Sigmoid colon (tissue), 7 donors: ENCODE measurements at regions of chr3 and their contacts with region 1.

Region 1: DNA sequence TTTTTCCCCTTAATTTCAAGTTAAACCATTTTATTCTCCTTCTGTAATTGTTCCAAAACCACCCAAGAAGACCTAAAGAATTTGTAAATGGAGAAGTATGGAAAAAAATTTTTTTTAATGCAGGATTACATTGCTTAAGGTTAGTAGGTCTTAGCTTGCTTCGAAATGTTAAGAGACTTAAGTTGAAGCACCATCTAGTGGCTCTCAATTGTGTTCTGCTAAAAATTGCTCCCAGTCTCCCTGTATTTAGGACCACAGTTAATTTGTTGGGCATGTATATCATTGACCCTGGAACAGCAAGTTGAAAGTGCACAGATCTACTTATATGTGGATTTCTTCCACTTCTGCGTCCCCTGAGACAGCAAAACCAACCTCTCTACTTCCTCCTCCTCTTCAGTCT is 32.4 kb downstream of the CD200R1L start:
- DNase-seq: no peak
- H3K4me3 ChIP-seq: no peak overlapping the region
- H3K27ac ChIP-seq: peak overlapping the region in 2 of 4 donors; percentile 82 to 83
- H3K4me1 ChIP-seq: peaks cover 0 to 42% (median 29%) of the 10 kb centered on the region in 4 donors
- H3K27me3 ChIP-seq: no peaks in the 10 kb centered on the region
- CTCF ChIP-seq: peak in 3 of 4 experiments; percentile 23 to 44 (median 31)
- EP300 ChIP-seq: no peak
- POLR2A ChIP-seq: no peak

Region 2: GRCh38 chr3:111967651-111968274 is 846.5 kb before region 1 on chr3:
- intact Hi-C with region 1: no loop called
- DNase-seq: peak; percentile 92
- H3K4me3 ChIP-seq: no peak overlapping the region
- H3K27ac ChIP-seq: peak overlapping the region; percentile 44 to 54 (median 51)
- H3K4me1 ChIP-seq: peaks cover 0 to 32% (median 19%) of the 10 kb centered on the region in 4 donors
- H3K27me3 ChIP-seq: no peaks in the 10 kb centered on the region
- CTCF ChIP-seq: peak; percentile 86 to 88 (median 86)
- EP300 ChIP-seq: no peak
- POLR2A ChIP-seq: no peak

Region 3: GRCh38 chr3:112561731-112562688 is 252.3 kb before region 1 on chr3 and contains the starts of genes ATG3 and SLC35A5:
- intact Hi-C with region 1: loop called (anchors 5 kb)
- DNase-seq: peak; percentile 99
- H3K4me3 ChIP-seq: peak within 1 kb of the TSS; percentile 68 to 98 (median 88)
- H3K27ac ChIP-seq: peak within 1 kb of the TSS; percentile 94 to 98 (median 97)
- H3K4me1 ChIP-seq: peaks cover 0 to 37% (median 27%) of the 10 kb centered on the region in 4 donors
- H3K27me3 ChIP-seq: no peaks in the 10 kb centered on the region
- CTCF ChIP-seq: no peak
- EP300 ChIP-seq: peak in 1 of 4 donors; percentile 70
- POLR2A ChIP-seq: peak; percentile 67 to 79
- total RNA-seq, gene ATG3: 28.0 to 49.5 (median 41.1) TPM
- total RNA-seq, gene SLC35A5: 16.1 to 32.1 (median 17.5) TPM

Region 4: DNA sequence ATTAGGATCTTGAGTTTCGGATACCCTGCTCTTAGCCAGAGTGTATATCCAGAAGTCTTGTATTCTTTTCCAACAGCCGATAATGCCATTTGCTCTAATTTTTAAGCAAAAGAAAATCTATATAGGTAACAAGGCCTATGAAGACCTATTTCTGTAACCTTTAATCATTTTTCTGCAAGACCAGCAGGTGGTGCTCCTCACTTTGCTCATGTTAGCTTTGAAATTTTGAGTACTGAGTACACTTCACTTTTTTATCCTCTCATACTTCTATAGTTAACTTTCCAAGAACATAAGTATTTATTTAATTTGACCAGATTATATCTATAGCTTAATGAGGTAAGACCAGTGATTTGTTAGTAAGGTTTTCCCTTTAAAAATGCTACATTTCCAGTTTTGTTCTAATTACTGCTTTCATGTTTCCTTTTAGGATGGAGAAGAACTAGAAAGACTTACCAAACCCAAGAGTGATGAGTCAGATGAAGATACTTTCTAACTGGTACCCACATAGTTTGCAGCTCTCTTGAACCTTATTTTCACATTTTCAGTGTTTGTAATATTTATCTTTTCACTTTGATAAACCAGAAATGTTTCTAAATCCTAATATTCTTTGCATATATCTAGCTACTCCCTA is 231.9 kb before region 1 on chr3:
- intact Hi-C with region 1: loop called (anchors 1 kb)
- DNase-seq: no peak
- H3K4me3 ChIP-seq: no peak overlapping the region
- H3K27ac ChIP-seq: no peak overlapping the region
- H3K4me1 ChIP-seq: peaks cover 0 to 9% (median 0%) of the 10 kb centered on the region in 4 donors
- H3K27me3 ChIP-seq: no peaks in the 10 kb centered on the region
- CTCF ChIP-seq: peak; percentile 48 to 65 (median 50)
- EP300 ChIP-seq: no peak
- POLR2A ChIP-seq: no peak

Region 5: GRCh38 chr3:112642912-112643506 is 171.3 kb before region 1 on chr3:
- intact Hi-C with region 1: loop called (anchors 2 kb)
- DNase-seq: peak; percentile 93
- H3K4me3 ChIP-seq: peak overlapping the region in 3 of 4 donors; percentile 11 to 15 (median 13)
- H3K27ac ChIP-seq: peak overlapping the region in 3 of 4 donors; percentile 11 to 86 (median 80)
- H3K4me1 ChIP-seq: peaks cover 0 to 65% (median 60%) of the 10 kb centered on the region in 4 donors
- H3K27me3 ChIP-seq: no peaks in the 10 kb centered on the region
- CTCF ChIP-seq: peak; percentile 77 to 81 (median 79)
- EP300 ChIP-seq: no peak
- POLR2A ChIP-seq: no peak

Region 6: DNA sequence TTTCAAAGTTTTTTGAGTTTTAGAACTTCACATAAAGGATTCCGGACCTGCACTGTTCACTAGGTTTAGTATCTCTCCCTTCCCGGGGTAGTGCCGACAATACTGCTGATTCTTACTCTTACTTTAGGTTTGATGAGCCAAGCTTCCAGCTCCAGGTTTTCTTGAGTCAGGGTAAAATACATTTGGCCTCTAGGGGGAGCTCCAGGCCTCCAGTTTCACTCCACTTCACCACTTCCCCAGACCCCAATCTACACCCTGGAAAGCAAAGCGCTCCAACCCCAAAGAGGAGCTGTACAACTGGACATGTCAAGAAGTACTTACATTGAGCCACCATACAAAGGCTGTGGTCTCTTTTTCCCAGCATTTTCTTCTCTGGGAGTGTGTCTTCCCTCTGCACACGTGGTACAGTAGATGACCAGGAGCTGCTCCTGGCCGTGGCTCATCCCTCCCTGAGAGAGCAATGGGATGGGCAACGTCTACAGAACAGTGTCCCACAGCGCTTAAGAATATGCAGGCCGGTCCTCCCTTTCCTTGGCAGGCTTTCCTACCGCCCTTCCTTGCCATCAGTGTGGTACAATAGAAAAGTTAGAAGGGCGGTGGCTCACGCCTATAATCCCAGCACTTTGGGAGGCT is 79.4 kb before region 1 on chr3:
- intact Hi-C with region 1: loop called (anchors 2 kb)
- DNase-seq: peak; percentile 71
- H3K4me3 ChIP-seq: no peak overlapping the region
- H3K27ac ChIP-seq: no peak overlapping the region
- H3K4me1 ChIP-seq: no peaks in the 10 kb centered on the region
- H3K27me3 ChIP-seq: no peaks in the 10 kb centered on the region
- CTCF ChIP-seq: peak in 3 of 4 experiments; percentile 36 to 58 (median 50)
- EP300 ChIP-seq: no peak
- POLR2A ChIP-seq: no peak

Region 7: DNA sequence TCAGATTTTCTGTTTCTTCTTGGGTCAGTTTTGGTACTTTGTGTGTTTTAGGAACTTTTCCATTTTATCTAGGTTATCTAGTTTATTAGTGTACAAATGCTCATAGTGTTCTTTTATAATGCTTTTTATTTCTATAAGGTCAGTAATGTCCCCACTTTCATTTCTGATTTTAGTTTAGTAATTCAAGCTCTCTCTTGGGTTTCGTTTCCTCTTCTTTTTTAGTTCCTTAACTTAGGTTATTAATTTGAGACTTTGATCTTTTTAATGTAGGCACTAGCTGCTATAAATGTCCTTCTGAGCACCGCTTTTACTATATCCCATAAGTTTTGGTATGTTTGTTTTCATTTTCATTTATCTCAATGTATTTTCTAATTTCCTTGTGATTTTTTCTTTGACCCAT is 59.4 kb after region 1 on chr3:
- intact Hi-C with region 1: no loop called
- DNase-seq: no peak
- H3K4me3 ChIP-seq: no peak overlapping the region
- H3K27ac ChIP-seq: no peak overlapping the region
- H3K4me1 ChIP-seq: no peaks in the 10 kb centered on the region
- H3K27me3 ChIP-seq: no peaks in the 10 kb centered on the region
- CTCF ChIP-seq: no peak
- EP300 ChIP-seq: no peak
- POLR2A ChIP-seq: no peak

Region 8: DNA sequence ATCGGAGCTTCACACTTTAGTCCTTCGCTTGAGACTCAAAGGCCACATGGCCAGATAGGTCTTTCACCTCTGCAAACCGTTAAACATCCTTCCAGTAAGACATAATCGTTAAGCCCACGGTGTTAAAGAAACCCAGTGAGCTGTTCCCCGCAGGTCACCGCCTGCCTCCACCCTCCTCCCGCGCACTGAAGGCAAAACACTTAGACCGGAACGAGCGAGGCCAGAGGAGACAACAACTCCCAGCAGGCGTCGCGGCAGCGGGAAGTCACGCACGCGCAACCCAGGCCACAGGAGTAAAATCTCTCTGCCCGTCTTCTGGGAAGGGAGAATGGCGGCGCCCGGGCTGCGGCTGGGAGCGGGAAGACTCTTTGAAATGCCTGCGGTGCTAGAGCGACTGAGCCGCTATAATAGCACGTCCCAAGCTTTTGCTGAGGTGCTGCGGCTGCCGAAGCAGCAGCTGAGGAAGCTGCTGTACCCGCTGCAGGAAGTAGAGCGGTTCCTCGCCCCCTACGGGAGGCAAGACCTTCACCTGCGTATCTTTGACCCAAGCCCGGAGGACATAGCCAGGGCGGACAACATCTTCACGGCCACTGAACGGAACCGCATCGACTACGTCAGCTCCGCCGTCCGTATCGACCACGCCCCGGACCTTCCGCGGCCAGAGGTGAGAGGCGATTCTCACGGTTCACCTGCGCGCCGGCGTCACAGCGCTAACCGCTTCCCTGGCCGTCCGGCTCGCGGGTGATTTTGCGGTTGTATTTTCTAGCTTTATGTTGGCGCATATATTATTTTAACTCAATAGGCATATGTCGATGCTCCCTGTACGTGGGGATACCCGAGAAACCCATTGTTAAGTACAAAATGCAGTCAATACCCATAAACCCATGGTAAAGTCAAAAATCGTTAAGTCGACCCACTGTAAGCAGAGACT is 176.7 kb after region 1 on chr3 and contains the start of gene GTPBP8:
- intact Hi-C with region 1: loop called (anchors 5 kb)
- DNase-seq: peak; percentile 96
- H3K4me3 ChIP-seq: peak within 1 kb of the TSS; percentile 81 to 94 (median 88)
- H3K27ac ChIP-seq: peak within 1 kb of the TSS; percentile 95 to 96 (median 95)
- H3K4me1 ChIP-seq: peaks cover 0 to 20% (median 15%) of the 10 kb centered on the region in 4 donors
- H3K27me3 ChIP-seq: no peaks in the 10 kb centered on the region
- CTCF ChIP-seq: no peak
- EP300 ChIP-seq: peak in 1 of 4 donors; percentile 4
- POLR2A ChIP-seq: peak; percentile 93 to 94
- total RNA-seq, gene GTPBP8: 20.4 to 38.2 (median 32.8) TPM

Region 9: GRCh38 chr3:114056130-114057010 is 1242.1 kb after region 1 on chr3 and contains the starts of genes CCDC191 and QTRT2:
- intact Hi-C with region 1: loop called (anchors 5 kb)
- DNase-seq: peak; percentile 99
- H3K4me3 ChIP-seq: peak within 1 kb of the TSS; percentile 67 to 76 (median 72)
- H3K27ac ChIP-seq: peak within 1 kb of the TSS; percentile 82 to 86 (median 85)
- H3K4me1 ChIP-seq: peaks cover 0 to 30% (median 19%) of the 10 kb centered on the region in 4 donors
- H3K27me3 ChIP-seq: no peaks in the 10 kb centered on the region
- CTCF ChIP-seq: no peak
- EP300 ChIP-seq: peak in 1 of 4 donors; percentile 81
- POLR2A ChIP-seq: no peak
- total RNA-seq, gene CCDC191: 3.2 to 5.5 (median 4.7) TPM
- total RNA-seq, gene QTRT2: 8.0 to 17.5 (median 12.4) TPM